ENCODE measurements at regions of chr5 and their contacts with region 1.

Region 1: GRCh38 chr5:7868773-7869473 is at the starts of genes FASTKD3 and MTRR:
- DNase-seq: peak; percentile 97
- ATAC-seq: peak; percentile 100
- H3K4me3 ChIP-seq: peak within 1 kb of the TSS; percentile 88
- H3K27ac ChIP-seq: peak within 1 kb of the TSS; percentile 23
- H3K4me1 ChIP-seq: peaks cover 22% of the 10 kb centered on the region
- H3K27me3 ChIP-seq: no peaks in the 10 kb centered on the region
- CTCF ChIP-seq: no peak
- total RNA-seq, gene FASTKD3: 9.2 and 16.5 TPM in 2 replicates
- total RNA-seq, gene MTRR: 64.9 and 68.3 TPM in 2 replicates

Region 2: DNA sequence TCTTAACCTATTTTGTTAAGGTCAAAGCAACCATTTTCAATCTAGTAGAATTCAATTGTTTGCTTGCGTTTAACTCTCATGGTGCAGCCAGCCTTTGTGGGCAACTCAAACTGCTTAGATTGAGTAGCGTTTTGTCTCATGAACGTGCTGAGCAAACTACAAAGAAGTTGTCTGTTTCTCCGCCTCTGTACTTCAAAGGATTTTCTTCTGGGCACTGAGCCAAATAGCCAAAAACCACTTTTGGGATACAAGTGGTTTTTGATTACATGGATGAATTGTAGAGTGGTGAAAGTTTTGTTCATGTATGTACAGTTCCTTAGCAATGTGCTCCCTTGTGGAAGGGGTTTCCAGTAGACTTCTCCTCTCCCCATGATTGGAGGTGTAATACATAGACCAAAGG is 140.8 kb before region 1 on chr5:
- CTCF ChIA-PET with region 1: no interaction called
- POLR2A ChIA-PET with region 1: no interaction called
- intact Hi-C with region 1: no loop called
- DNase-seq: no peak
- ATAC-seq: no peak
- H3K4me3 ChIP-seq: no peak overlapping the region
- H3K27ac ChIP-seq: no peak overlapping the region
- H3K4me1 ChIP-seq: no peaks in the 10 kb centered on the region
- H3K27me3 ChIP-seq: peaks cover 24% of the 10 kb centered on the region; the same call in 1 of the 2 replicates
- CTCF ChIP-seq: no peak

Region 3: DNA sequence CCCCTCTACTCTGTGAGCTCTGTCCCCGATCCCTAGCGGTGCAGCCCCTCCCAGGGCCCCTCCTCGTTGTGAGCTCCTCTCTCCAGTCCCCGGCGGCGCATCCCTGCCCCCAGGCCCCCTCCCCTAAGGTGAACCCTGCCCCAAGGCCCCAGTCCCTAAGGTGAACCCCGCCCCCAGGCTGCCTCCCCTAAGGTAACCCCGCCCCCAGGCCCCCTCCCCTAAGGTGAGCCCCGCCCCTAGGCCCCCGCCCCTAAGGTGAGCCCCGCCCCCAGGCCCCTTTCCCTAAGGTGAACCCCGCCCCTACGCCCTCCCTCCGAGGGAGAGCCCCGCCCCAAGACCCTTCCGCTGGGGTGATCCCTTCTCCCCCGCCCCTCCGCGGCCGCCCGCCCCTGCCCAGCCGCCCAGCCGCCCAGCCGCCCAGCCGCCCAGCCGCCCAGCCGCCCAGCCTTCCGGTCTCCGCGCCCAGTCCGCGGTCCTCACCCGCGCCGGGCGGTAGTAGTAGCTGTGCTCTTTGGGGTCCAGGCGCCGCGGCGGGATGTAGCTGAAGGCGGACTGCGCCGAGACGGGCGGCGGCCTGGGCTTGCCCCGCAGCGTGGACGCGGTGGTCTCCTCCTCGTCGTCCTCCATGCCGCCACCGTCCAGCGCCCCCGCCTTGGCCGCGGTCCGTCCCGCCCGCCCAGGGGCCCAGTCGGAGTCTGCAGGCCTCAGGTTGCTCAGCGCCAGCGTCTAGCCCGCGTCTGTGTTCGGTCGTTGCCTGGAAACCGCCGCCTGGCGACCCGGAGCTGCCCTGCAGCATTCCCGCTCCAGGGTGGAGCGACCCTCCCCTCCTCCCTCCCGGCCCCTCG is 18.3 kb before region 1 on chr5 and contains the start of gene CFAP90:
- CTCF ChIA-PET with region 1: interaction called, 10 read pairs
- POLR2A ChIA-PET with region 1: no interaction called
- intact Hi-C with region 1: no loop called
- DNase-seq: peak; percentile 46
- ATAC-seq: peak; percentile 86
- H3K4me3 ChIP-seq: peak within 1 kb of the TSS; percentile 58
- H3K27ac ChIP-seq: no peak within 1 kb of the TSS
- H3K4me1 ChIP-seq: no peaks in the 10 kb centered on the region
- H3K27me3 ChIP-seq: peaks cover 7% of the 10 kb centered on the region; the same call in 1 of the 2 replicates
- CTCF ChIP-seq: peak; percentile 34; the same call in 1 of the 2 replicates
- total RNA-seq, gene CFAP90: 0.58 TPM in 1 of 2 replicates, not detected in the other

Region 4: DNA sequence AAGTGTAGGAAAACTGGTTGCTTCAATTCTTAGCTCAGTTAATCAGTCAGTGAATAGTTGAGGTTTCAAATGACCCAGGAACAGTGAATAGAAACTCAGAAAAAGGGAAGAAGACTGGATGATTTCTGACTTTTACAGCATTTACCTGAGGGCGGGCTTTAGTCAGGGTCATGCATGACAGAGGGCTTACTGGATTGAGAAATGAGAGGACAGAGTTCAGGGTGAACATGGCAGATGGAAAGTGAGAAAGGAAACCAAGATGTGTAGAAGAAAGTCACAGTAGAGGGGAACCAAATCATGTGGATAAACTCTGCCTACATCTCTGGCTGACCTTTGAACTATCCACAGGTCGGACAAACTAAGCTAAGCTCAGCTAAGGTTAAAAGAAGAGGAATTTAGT is 1081.0 kb after region 1 on chr5:
- CTCF ChIA-PET with region 1: no interaction called
- POLR2A ChIA-PET with region 1: no interaction called
- intact Hi-C with region 1: no loop called
- DNase-seq: no peak
- ATAC-seq: no peak
- H3K4me3 ChIP-seq: no peak overlapping the region
- H3K27ac ChIP-seq: no peak overlapping the region
- H3K4me1 ChIP-seq: no peaks in the 10 kb centered on the region
- H3K27me3 ChIP-seq: no peaks in the 10 kb centered on the region
- CTCF ChIP-seq: no peak

Measured in PC-3 (cell line).